Activated T-helper 2 cell treated with anti-CD3 and anti-CD28 coated beads, Interferon-gamma antibody, Interleukin-2, Interleukin-4, amounts not matched to agents 10 μg/mL and 5 μg/mL and 100 μg/mL, durations not matched to agents 14 hours and 24 hours and 36 hours (primary cell): ENCODE measurements at regions of chr14 and their contacts with region 1.

Region 1: DNA sequence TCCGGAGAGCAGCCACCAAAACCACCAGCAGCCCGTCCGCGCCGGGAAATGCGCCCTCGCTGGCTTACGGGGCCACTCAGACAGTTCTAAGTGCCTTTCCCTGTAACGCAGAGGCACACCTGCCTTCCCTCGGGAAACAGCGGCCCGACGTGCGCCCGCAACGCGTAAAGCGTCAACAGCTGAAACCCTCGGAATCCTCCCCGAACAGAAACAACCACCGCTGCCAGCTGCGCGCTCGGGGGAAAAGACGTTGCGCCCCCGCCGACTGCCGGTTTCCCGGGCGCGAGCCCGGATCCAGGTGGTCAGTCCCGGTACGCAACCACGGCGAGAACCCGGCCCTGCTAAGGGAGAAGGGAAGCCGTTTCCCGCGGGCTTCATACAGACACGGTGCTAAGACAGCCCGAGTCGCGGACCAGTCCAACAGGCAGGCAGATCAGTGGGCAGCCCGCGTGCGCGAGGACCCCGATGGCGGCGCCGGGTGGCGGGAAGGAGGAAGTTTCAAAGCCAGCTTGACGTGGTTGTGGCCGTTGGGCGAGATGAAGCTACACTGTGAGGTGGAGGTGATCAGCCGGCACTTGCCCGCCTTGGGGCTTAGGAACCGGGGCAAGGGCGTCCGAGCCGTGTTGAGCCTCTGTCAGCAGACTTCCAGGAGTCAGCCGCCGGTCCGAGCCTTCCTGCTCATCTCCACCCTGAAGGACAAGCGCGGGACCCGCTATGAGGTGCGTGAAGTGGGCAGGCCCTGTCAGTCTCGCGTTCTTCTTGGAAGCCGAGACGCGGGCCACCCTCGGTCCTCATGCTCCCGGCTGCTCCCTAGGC is at the start of gene LRR1:
- DNase-seq: peak; percentile 84
- H3K4me3 Mint-ChIP-seq: peak within 1 kb of the TSS; percentile 92
- H3K27ac Mint-ChIP-seq: peak within 1 kb of the TSS; percentile 92
- H3K4me1 Mint-ChIP-seq: peaks cover 37% of the 10 kb centered on the region
- H3K27me3 Mint-ChIP-seq: no peaks in the 10 kb centered on the region
- total RNA-seq, gene LRR1: 44.2 and 45.4 TPM in 2 replicates

Region 2: DNA sequence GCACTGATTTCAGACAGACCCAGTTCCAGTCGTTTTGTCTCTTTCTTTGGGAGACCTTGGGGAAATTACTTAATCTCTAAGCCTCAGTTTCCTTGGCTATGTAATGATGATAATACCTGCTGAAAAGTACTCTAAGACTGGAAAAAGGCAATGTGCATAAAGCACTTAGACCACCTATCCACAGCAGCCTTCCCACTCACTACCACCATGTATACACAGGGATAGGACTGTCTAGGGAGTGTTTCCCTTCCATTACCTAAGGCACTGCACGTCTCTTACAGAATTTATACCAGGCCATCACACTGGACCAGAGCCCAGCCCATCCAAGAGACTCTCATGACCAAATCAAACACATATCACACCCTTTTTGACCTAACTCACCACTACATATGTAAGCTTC is 18.9 kb before region 1 on chr14:
- intact Hi-C with region 1: no loop called
- DNase-seq: no peak
- H3K4me3 Mint-ChIP-seq: no peak overlapping the region
- H3K27ac Mint-ChIP-seq: peak overlapping the region; percentile 35
- H3K4me1 Mint-ChIP-seq: peaks cover 52% of the 10 kb centered on the region
- H3K27me3 Mint-ChIP-seq: no peaks in the 10 kb centered on the region

Region 3: DNA sequence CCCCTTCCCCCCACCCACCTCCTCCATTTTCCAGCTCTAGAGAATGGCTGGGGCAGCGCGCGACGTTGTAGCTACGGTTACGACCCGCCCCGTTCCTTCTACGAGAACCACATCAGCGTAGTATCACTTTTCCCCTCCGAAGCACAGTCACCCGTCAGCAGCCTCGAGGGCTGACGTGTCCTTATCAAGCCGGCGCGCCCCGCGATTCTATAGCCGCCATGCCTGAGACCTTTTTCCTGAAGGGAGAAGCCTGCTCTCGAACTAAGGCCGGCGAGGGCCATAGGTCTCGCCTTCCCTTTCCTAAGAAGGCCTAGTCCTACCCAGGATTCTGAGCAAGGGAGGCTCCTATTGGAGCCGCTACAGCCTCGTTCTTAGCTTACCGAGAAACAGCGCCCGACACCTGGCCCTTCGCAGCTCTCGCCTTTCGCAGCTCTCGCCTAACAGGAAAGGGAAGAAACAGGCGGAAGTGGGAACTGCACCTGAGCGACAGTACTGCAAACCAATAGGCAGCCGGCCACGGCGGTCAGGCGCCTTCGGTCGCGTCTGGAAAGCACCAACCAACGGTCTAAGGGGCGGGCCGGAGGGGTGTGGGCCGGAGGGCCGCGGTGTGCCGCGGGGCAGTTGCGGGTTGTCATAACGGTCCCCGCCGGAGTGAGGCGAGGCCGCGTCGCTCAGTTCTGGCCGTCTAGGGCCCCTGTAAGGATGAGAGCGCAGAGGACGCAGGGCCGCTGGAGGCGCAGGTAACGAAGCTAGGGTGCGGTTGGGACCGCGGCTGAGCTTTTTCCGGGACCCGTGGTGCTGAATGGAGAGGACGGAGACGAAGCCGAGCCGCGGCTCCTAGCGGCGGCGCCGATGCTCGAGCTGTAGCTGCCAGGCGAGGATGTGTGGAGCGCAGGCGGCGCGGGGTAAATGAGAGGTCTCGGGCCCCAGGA is 21.8 kb after region 1 on chr14 and contains the starts of genes MGAT2 and RPL36AL:
- intact Hi-C with region 1: loop called (anchors 1 kb)
- DNase-seq: peak; percentile 96
- H3K4me3 Mint-ChIP-seq: peak within 1 kb of the TSS; percentile 91
- H3K27ac Mint-ChIP-seq: peak within 1 kb of the TSS; percentile 94
- H3K4me1 Mint-ChIP-seq: peaks cover 44% of the 10 kb centered on the region
- H3K27me3 Mint-ChIP-seq: no peaks in the 10 kb centered on the region
- total RNA-seq, gene MGAT2: 57.0 and 57.9 TPM in 2 replicates
- total RNA-seq, gene RPL36AL: 278 and 292 TPM in 2 replicates

Region 4: DNA sequence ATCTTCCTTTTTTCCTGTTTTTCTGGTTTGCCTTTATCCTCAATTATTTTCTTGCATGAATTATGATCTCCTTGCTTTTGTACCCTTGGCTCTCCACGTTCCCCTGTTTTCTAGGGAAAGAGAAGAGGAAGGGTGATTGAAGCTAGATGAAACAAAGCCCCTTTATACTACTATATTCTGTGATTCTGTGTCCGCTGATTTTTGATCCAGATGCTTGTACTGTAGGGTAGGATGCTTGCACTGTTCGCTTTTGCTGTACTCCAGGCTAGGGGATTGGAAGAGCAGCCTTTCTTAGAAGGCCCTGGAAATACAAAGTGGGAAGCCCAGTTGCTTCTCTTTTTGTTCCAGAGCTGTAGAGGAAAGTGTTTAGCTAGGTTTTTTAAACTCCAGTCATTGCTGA is 134.2 kb after region 1 on chr14:
- intact Hi-C with region 1: no loop called
- DNase-seq: no peak
- H3K4me3 Mint-ChIP-seq: no peak overlapping the region
- H3K27ac Mint-ChIP-seq: no peak overlapping the region
- H3K4me1 Mint-ChIP-seq: no peaks in the 10 kb centered on the region
- H3K27me3 Mint-ChIP-seq: no peaks in the 10 kb centered on the region

Region 5: DNA sequence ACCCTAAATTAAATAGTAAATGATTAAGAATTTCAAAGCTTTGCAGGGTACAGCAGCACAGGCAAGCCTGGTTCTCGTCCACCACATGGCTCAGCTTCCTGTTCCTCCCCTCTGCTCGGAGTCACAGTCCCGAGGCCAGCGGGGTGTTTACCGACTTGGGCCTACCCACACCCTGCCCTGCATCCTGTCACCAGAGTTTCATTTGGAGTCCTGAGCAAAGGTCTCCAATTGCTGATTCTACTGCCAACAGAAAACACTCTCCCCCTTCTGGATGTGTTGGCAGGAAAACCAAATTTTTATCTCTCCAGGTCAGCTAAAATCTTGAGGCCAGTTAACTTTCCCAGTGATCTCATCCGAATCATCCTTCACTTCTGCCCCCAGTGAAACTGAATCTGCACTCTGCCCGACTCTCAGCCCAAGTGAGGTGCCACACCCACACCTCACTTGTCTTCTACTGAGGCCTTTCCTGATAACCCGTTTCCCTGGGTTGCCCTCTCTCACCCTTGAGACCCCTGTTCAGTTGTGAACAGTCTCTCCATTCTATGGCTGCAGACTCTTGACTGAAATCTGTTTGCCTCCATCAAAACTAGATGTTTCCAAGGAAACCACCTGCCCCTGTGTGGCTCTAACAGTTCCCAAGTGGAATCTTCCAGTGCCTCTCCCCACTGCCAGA is 446.5 kb after region 1 on chr14:
- intact Hi-C with region 1: no loop called
- DNase-seq: peak; percentile 75
- H3K4me3 Mint-ChIP-seq: no peak overlapping the region
- H3K27ac Mint-ChIP-seq: peak overlapping the region; percentile 88
- H3K4me1 Mint-ChIP-seq: peaks cover 50% of the 10 kb centered on the region
- H3K27me3 Mint-ChIP-seq: no peaks in the 10 kb centered on the region